Breast epithelium (tissue), 4 donors: ENCODE measurements at regions of chr19 and their contacts with region 1.

Region 1: GRCh38 chr19:3054972-3055740 is 7.1 kb downstream of the TLE5 start:
- DNase-seq: no peak
- H3K4me3 ChIP-seq: peak overlapping the region in 2 of 3 donors; percentile 16 to 45
- H3K27ac ChIP-seq: peak overlapping the region; percentile 87 to 93
- H3K4me1 ChIP-seq: peaks cover 11 to 44% of the 10 kb centered on the region in 2 donors
- H3K27me3 ChIP-seq: no peaks in the 10 kb centered on the region
- CTCF ChIP-seq: no peak
- POLR2A ChIP-seq: no peak

Region 2: GRCh38 chr19:3080301-3081026 is 25.3 kb after region 1 on chr19:
- intact Hi-C with region 1: no loop called
- DNase-seq: peak in 1 of 2 donors; percentile 77
- H3K4me3 ChIP-seq: no peak overlapping the region
- H3K27ac ChIP-seq: peak overlapping the region; percentile 82 to 85
- H3K4me1 ChIP-seq: peaks cover 0 to 5% of the 10 kb centered on the region in 2 donors
- H3K27me3 ChIP-seq: no peaks in the 10 kb centered on the region
- CTCF ChIP-seq: no peak
- POLR2A ChIP-seq: no peak

Region 3: DNA sequence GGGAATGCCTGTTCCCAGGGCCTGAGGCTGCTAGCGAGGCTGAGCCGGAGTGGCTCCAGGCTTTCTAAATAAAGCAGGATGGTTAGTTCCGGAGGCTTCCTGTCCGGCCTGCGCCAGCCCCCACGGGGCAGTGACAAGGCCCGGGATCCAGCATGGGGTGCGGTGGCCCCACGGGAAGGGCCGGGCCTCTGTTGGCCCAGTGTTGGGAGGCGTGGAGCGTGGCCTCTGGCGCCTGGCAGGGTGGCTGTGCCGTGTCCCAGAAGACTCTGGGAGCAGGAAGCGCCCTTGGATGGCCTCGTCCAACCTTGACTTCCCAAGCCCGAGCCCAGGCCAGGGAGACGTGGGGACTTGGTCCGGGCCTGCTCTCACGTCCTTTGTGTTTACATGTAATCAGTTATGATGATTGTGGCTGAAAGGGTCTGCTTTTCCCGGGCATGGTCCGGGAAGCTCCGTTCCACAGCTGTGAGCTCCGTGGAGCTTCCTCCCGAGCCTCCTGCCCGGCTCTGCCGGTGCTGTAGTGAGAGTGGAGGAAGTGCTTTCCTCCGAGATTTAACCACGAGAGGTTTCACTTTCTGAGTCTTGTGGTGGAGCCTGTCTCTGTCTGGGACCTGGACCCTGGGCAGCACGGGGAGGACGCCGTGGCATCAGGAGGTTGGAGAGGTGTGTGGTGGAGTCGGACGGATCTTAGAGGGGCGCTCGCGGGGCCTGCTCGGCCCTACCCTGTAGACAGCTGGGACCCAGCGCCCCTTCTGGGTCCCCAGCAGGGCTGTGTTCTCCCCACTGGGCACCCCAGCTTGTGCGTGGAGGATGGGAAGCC is 43.6 kb after region 1 on chr19:
- intact Hi-C with region 1: no loop called
- DNase-seq: no peak
- H3K4me3 ChIP-seq: peak overlapping the region; percentile 33 to 98 (median 65)
- H3K27ac ChIP-seq: peak overlapping the region; percentile 89 to 96
- H3K4me1 ChIP-seq: peaks cover 24 to 37% of the 10 kb centered on the region in 2 donors
- H3K27me3 ChIP-seq: no peaks in the 10 kb centered on the region
- CTCF ChIP-seq: no peak
- POLR2A ChIP-seq: no peak

Region 4: GRCh38 chr19:4669723-4670480 is 1614.7 kb after region 1 on chr19 and contains the start of gene MYDGF:
- intact Hi-C with region 1: loop called (anchors 5 kb)
- DNase-seq: peak; percentile 77 to 91
- H3K4me3 ChIP-seq: peak within 1 kb of the TSS; percentile 93 to 99 (median 97)
- H3K27ac ChIP-seq: peak within 1 kb of the TSS; percentile 84 to 88
- H3K4me1 ChIP-seq: peaks cover 0 to 4% of the 10 kb centered on the region in 2 donors
- H3K27me3 ChIP-seq: no peaks in the 10 kb centered on the region
- CTCF ChIP-seq: no peak
- POLR2A ChIP-seq: no peak
- total RNA-seq, gene MYDGF: 36.3 to 55.1 (median 42.1) TPM